HEK293T (cell line): ENCODE measurements at regions of chr5 and their contacts with region 1.

Region 1: GRCh38 chr5:10868956-10869355 is 107.9 kb upstream of the DAP start:
- DNase-seq: no peak

Region 2: GRCh38 chr5:10827571-10827970 is 41.4 kb before region 1 on chr5:
- CTCF ChIA-PET with region 1: no interaction called
- POLR2A ChIA-PET with region 1: no interaction called
- DNase-seq: no peak

Region 3: DNA sequence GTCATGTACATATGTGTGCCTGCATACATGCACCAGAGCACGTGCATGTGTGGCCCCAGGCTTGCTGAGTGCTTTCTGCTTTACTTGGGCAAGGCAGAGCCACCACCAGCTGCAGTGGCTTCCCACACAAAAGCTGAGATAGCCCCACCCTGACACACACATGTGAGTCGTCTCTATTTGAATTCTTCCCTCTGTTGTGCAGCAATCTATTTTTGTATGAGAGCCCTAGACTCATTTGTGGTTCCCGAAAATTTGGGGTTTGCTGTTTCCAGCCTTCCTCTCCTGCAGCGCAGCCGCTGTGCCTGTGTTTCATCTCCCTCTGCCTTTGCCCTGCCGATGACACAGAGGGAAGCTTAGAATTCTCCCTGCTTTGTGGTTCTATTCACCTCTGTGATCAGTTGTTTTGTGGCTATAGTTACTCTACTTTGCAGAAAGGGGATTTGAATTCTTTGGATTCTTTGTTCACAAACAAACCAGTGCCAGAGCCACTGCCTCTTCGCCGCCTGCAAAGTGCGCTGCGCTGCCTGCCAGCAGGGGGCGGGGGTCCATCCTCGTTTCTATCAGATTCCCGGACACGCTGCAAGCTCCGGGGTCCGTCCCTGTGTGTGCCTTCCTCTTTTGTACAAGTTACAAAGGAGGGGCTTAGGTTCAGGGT is 12.1 kb before region 1 on chr5:
- CTCF ChIA-PET with region 1: interaction called, 15 read pairs
- POLR2A ChIA-PET with region 1: no interaction called
- DNase-seq: peak; percentile 67

Region 4: GRCh38 chr5:10885026-10885425 is 16.1 kb after region 1 on chr5:
- CTCF ChIA-PET with region 1: no interaction called
- POLR2A ChIA-PET with region 1: no interaction called
- DNase-seq: no peak